ENCODE measurements at regions of chr13 and their contacts with region 1.

Region 1: DNA sequence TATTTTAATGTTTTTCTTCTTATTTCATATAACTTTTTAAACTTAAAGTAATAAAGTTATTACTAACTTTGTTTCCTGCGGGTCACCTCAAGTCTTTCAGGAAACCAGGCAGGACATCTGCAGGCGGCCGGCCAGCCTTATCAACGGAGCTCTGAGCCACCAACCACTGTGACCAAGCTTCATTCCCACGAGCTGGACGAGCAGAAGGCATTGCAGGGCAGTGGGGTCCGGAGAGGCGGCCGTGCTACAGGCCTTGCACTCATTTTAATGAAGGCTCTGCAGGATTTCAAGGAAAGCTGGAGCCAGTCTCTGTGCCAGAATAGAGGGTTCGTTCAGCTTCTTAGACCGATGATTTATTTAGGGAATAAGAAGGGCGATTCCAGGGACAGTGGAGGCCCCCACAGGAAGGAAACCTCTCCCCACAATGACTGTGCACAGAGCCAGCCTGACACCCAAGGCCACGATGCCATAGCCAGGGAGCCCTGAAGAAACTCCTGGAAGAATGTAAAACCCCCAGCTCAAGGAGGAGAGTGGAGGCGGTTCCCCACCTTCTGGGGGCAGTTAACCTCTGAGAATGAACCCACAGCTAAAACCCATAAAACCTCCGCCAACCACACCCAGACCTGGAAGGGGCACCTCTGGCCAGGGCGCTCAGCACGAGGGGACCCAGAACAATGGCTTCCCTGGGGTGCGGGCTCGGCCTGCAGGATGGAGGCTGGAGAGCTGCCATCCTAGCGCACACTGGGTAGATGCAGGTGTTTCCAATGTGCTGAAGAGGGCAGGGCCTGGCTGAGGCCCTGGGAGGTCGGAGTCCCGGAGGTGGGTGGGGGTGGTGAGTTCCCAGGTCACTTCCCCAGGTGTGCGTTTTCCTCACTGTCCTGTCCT is 75.0 kb downstream of the RASA3 start:
- DNase-seq: no peak

Region 2: GRCh38 chr13:114124921-114125320 is 67.5 kb after region 1 on chr13:
- in situ Hi-C with region 1: loop called (anchors 5 kb)
- DNase-seq: no peak

Measured in G401 (cell line).